Natural killer cell (primary cell): ENCODE measurements at regions of chr12 and their contacts with region 1.

Region 1: GRCh38 chr12:104358347-104359003 is 54.9 kb downstream of the EID3 start:
- DNase-seq: peak; percentile 56 to 83
- ATAC-seq: peak; percentile 92 to 99 (median 98)
- H3K4me3 ChIP-seq: no peak overlapping the region
- H3K4me3 Mint-ChIP-seq: no peak overlapping the region
- H3K27ac ChIP-seq: no peak overlapping the region
- H3K27ac Mint-ChIP-seq: no peak overlapping the region
- H3K4me1 ChIP-seq: no peaks in the 10 kb centered on the region
- H3K4me1 Mint-ChIP-seq: peaks cover 0 to 5% of the 10 kb centered on the region in 2 donors
- H3K27me3 ChIP-seq: no peaks in the 10 kb centered on the region
- H3K27me3 Mint-ChIP-seq: no peaks in the 10 kb centered on the region
- CTCF ChIP-seq: peak; percentile 71

Region 2: GRCh38 chr12:104201238-104202001 is 157.1 kb before region 1 on chr12:
- intact Hi-C with region 1: loop called (anchors 1 kb)
- DNase-seq: peak; percentile 31 to 84
- ATAC-seq: peak; percentile 61 to 86 (median 76)
- H3K4me3 ChIP-seq: no peak overlapping the region
- H3K4me3 Mint-ChIP-seq: no peak overlapping the region
- H3K27ac ChIP-seq: no peak overlapping the region
- H3K27ac Mint-ChIP-seq: no peak overlapping the region
- H3K4me1 ChIP-seq: no peaks in the 10 kb centered on the region
- H3K4me1 Mint-ChIP-seq: no peaks in the 10 kb centered on the region
- H3K27me3 ChIP-seq: no peaks in the 10 kb centered on the region
- H3K27me3 Mint-ChIP-seq: peaks cover 16 to 34% of the 10 kb centered on the region in 2 donors
- CTCF ChIP-seq: peak; percentile 92

Region 3: DNA sequence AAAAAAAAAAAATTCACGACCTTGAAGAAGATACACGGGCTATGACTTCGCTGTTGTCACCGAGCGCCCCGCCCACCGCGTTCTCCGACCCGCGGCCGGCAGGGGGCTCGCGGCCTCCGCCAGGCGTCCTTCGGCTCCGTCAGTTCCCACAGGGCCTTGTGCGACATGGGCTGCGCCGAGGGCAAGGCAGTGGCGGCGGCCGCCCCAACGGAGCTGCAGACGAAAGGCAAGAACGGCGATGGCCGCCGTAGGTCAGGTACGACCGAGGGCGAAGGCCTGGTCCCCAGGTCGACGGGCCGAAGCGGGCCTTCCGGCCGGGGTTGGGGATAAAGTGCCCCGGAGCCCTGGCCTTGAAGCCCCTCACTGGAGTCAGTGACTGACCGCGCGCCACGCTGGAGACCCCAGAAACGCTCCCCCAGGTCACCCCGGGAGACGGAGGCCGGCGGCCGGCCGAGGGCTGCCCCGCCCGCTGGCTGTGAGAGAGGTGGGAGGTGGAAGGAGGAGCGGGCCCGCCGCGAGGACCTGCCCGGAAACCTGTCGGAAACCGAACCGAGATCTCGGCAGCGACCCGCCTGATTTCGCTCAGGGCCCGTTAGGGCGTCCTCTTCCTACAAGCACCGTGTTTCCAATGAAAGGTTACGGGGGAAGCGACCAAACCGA is 142.7 kb before region 1 on chr12 and contains the start of gene TXNRD1:
- intact Hi-C with region 1: loop called (anchors 1 kb)
- DNase-seq: peak; percentile 78 to 92
- ATAC-seq: peak; percentile 94 to 98 (median 98)
- H3K4me3 ChIP-seq: peak within 1 kb of the TSS; percentile 71
- H3K4me3 Mint-ChIP-seq: peak within 1 kb of the TSS; percentile 87
- H3K27ac ChIP-seq: peak within 1 kb of the TSS; percentile 37
- H3K27ac Mint-ChIP-seq: peak within 1 kb of the TSS in 1 of 2 donors; percentile 89
- H3K4me1 ChIP-seq: peaks cover 15% of the 10 kb centered on the region
- H3K4me1 Mint-ChIP-seq: peaks cover 10 to 20% of the 10 kb centered on the region in 2 donors
- H3K27me3 ChIP-seq: no peaks in the 10 kb centered on the region
- H3K27me3 Mint-ChIP-seq: peaks cover 0 to 5% of the 10 kb centered on the region in 2 donors
- CTCF ChIP-seq: peak; percentile 81
- total RNA-seq, gene TXNRD1: 46.9 to 59.7 (median 47.3) TPM

Region 4: DNA sequence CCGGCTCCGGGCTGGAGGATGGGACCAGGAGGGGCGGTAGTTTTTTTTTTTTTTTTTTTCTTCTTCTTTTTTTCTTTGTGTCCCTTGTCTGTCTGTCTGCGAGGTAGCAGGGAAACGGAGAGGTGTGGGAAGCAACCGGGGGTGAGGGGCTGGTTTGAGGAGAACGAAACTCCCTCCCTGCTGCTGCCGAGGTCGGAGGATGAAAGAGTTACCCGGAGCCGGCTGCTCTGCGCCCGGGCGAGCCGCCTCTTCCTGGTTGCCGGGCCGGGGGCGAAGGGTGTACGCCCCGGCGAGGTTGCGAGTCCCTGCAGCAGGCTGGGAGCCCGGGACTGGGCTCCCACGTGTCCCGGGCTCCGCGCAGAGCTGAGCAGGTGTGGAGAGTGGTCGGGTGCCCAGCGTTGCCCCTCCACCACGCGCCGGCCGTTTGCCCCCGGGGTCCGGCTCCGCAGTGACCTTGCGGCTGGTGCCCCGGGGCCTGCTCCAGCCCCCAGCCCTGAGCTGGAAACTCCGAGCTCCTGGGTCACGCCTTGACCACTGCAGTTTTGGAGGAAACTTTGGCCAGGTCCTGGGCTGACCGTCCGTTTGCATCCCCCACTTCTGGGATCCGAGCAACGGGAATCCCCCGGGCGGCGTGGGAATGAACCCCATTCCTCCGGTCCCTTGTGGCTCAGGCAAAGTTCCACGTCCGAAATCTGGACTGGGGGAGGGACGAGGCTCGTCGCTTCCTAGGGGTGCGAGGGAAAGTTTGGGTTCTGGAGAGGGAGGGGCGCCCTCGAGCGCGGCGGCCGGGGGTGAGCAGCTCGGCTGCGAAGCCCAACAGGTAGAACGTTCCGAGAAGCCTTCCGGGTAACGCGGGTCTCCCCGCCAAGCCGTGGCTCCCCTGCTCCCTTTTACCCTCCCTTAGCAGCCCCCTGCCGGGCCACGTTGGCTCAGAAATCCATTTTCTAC is 99.5 kb after region 1 on chr12:
- intact Hi-C with region 1: no loop called
- DNase-seq: peak; percentile 37 to 75
- ATAC-seq: peak; percentile 21 to 42 (median 27)
- H3K4me3 ChIP-seq: peak overlapping the region; percentile 96
- H3K4me3 Mint-ChIP-seq: peak overlapping the region; percentile 99
- H3K27ac ChIP-seq: peak overlapping the region; percentile 76
- H3K27ac Mint-ChIP-seq: peak overlapping the region; percentile 91 to 93
- H3K4me1 ChIP-seq: peaks cover 39% of the 10 kb centered on the region
- H3K4me1 Mint-ChIP-seq: peaks cover 50 to 61% of the 10 kb centered on the region in 2 donors
- H3K27me3 ChIP-seq: no peaks in the 10 kb centered on the region
- H3K27me3 Mint-ChIP-seq: no peaks in the 10 kb centered on the region
- CTCF ChIP-seq: no peak

Region 5: GRCh38 chr12:104825408-104825807 is 466.9 kb after region 1 on chr12:
- intact Hi-C with region 1: no loop called
- DNase-seq: peak in 1 of 2 donors; percentile 20
- ATAC-seq: no peak
- H3K4me3 ChIP-seq: no peak overlapping the region
- H3K4me3 Mint-ChIP-seq: no peak overlapping the region
- H3K27ac ChIP-seq: no peak overlapping the region
- H3K27ac Mint-ChIP-seq: no peak overlapping the region
- H3K4me1 ChIP-seq: no peaks in the 10 kb centered on the region
- H3K4me1 Mint-ChIP-seq: no peaks in the 10 kb centered on the region
- H3K27me3 ChIP-seq: no peaks in the 10 kb centered on the region
- H3K27me3 Mint-ChIP-seq: peaks cover 0 to 2% of the 10 kb centered on the region in 2 donors
- CTCF ChIP-seq: peak; percentile 23

Region 6: GRCh38 chr12:105474672-105475071 is 1116.2 kb after region 1 on chr12:
- intact Hi-C with region 1: no loop called
- DNase-seq: no peak
- ATAC-seq: no peak
- H3K4me3 ChIP-seq: no peak overlapping the region
- H3K4me3 Mint-ChIP-seq: no peak overlapping the region
- H3K27ac ChIP-seq: no peak overlapping the region
- H3K27ac Mint-ChIP-seq: no peak overlapping the region
- H3K4me1 ChIP-seq: no peaks in the 10 kb centered on the region
- H3K4me1 Mint-ChIP-seq: no peaks in the 10 kb centered on the region
- H3K27me3 ChIP-seq: no peaks in the 10 kb centered on the region
- H3K27me3 Mint-ChIP-seq: peaks cover 0 to 5% of the 10 kb centered on the region in 2 donors
- CTCF ChIP-seq: no peak